ENCODE measurements at regions of chr1 and their contacts with region 1.

Region 1: GRCh38 chr1:156212833-156213643 is at the start of gene PMF1:
- DNase-seq: peak; percentile 94
- ATAC-seq: peak; percentile 99
- H3K4me3 ChIP-seq: peak within 1 kb of the TSS; percentile 74
- H3K27ac ChIP-seq: peak within 1 kb of the TSS; percentile 93
- H3K4me1 ChIP-seq: 0 out of 2 replicates have a peak, but pooled peaks cover 2% of the 10 kb centered on the region
- H3K27me3 ChIP-seq: no peaks in the 10 kb centered on the region
- CTCF ChIP-seq: no peak
- POLR2A ChIP-seq: peak; percentile 89
- RAD21 ChIP-seq: no peak
- total RNA-seq, gene PMF1: 54.8 and 62.5 TPM in 2 replicates

Region 2: GRCh38 chr1:155970531-155971167 is 242.4 kb before region 1 on chr1:
- CTCF ChIA-PET with region 1: no interaction called
- POLR2A ChIA-PET with region 1: no interaction called
- dilution Hi-C with region 1: no loop called
- in situ Hi-C with region 1: no loop called
- intact Hi-C with region 1: no loop called
- DNase-seq: peak; percentile 88
- ATAC-seq: peak; percentile 80
- H3K4me3 ChIP-seq: no peak overlapping the region
- H3K27ac ChIP-seq: peak overlapping the region; percentile 69
- H3K4me1 ChIP-seq: peaks cover 60% of the 10 kb centered on the region
- H3K27me3 ChIP-seq: no peaks in the 10 kb centered on the region
- CTCF ChIP-seq: no peak
- POLR2A ChIP-seq: no peak
- RAD21 ChIP-seq: peak; percentile 18; the same call in 1 of the 2 replicates

Region 3: GRCh38 chr1:156160743-156161171 is 52.3 kb before region 1 on chr1:
- CTCF ChIA-PET with region 1: no interaction called
- POLR2A ChIA-PET with region 1: no interaction called
- dilution Hi-C with region 1: no loop called
- in situ Hi-C with region 1: loop called (anchors 5 kb)
- intact Hi-C with region 1: no loop called
- DNase-seq: peak; percentile 58
- ATAC-seq: peak; percentile 98
- H3K4me3 ChIP-seq: peak overlapping the region; percentile 39
- H3K27ac ChIP-seq: peak overlapping the region; percentile 45; the same call in 1 of the 2 replicates
- H3K4me1 ChIP-seq: peaks cover 8% of the 10 kb centered on the region
- H3K27me3 ChIP-seq: peaks cover 2% of the 10 kb centered on the region; the same call in 1 of the 2 replicates
- CTCF ChIP-seq: no peak
- POLR2A ChIP-seq: no peak
- RAD21 ChIP-seq: no peak

Measured in IMR-90 (cell line).